Lower lobe of right lung (tissue), 2 donors: ENCODE measurements at regions of chr3 and their contacts with region 1.

Region 1: DNA sequence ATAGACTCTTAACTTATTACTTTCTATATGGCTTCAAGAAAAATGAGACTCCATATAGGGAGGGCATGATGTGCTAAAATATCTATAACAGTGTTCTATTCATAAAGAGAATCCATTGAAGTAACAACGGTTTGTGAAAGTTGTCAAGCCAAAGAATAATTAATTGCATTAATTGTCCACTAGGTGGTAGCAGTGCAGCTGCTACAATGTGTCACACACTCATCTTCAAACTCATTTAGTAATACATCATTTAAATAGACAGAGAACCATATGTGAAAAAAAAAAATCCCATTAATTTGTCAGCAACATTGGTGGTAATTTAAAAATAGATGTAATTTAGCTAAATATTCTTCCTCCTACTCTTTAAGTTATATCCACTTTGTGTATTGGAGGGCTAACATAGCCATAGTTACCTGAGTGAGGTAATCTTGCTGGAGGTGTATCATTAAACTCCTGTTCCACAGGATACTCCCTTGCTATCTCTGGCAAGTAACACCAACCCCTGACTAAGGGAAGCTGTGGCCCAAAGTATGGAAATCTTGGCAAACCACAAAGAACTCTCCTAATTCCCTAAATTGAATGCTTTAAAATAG is 3.7 kb upstream of the CPA3 start:
- DNase-seq: no peak
- ATAC-seq: peak; percentile 64
- H3K4me3 ChIP-seq: no peak overlapping the region
- H3K27ac ChIP-seq: no peak overlapping the region
- H3K4me1 ChIP-seq: no peaks in the 10 kb centered on the region
- H3K27me3 ChIP-seq: no peaks in the 10 kb centered on the region
- CTCF ChIP-seq: peak; percentile 70

Region 2: GRCh38 chr3:148943506-148944205 is 82.3 kb after region 1 on chr3:
- intact Hi-C with region 1: loop called (anchors 5 kb)
- DNase-seq: no peak
- ATAC-seq: peak; percentile 81 to 87
- H3K4me3 ChIP-seq: no peak overlapping the region
- H3K27ac ChIP-seq: no peak overlapping the region
- H3K4me1 ChIP-seq: peaks cover 5% of the 10 kb centered on the region
- H3K27me3 ChIP-seq: no peaks in the 10 kb centered on the region
- CTCF ChIP-seq: peak; percentile 67